K562 (cell line): ENCODE measurements at regions of chr2 and their contacts with region 1.

Region 1: GRCh38 chr2:30252723-30253701 is 21.7 kb downstream of the LBH start:
- DNase-seq: peak; percentile 82 to 95 (median 86)
- ATAC-seq: peak; percentile 84
- H3K4me3 ChIP-seq: no peak overlapping the region
- H3K27ac ChIP-seq: peak overlapping the region; percentile 94
- H3K4me1 ChIP-seq: peaks cover 48 to 49% of the 10 kb centered on the region in 2 experiments
- H3K27me3 ChIP-seq: no peaks in the 10 kb centered on the region
- CTCF ChIP-seq: no peak
- EP300 ChIP-seq: peak; percentile 99
- POLR2A ChIP-seq: peak; percentile 50; the same call in 1 of the 2 replicates
- RAD21 ChIP-seq: peak; percentile 26 to 42

Region 2: GRCh38 chr2:29611850-29612249 is 641.2 kb before region 1 on chr2:
- CTCF ChIA-PET with region 1: no interaction called
- POLR2A ChIA-PET with region 1: no interaction called
- in situ Hi-C with region 1: no loop called
- intact Hi-C with region 1: no loop called
- DNase-seq: no peak
- ATAC-seq: no peak
- H3K4me3 ChIP-seq: no peak overlapping the region
- H3K27ac ChIP-seq: no peak overlapping the region
- H3K4me1 ChIP-seq: no peaks in the 10 kb centered on the region
- H3K27me3 ChIP-seq: no peaks in the 10 kb centered on the region
- CTCF ChIP-seq: no peak
- EP300 ChIP-seq: no peak
- POLR2A ChIP-seq: no peak
- RAD21 ChIP-seq: no peak

Region 3: GRCh38 chr2:29940706-29941105 is 312.3 kb before region 1 on chr2:
- CTCF ChIA-PET with region 1: no interaction called
- POLR2A ChIA-PET with region 1: no interaction called
- in situ Hi-C with region 1: no loop called
- intact Hi-C with region 1: no loop called
- DNase-seq: no peak
- ATAC-seq: no peak
- H3K4me3 ChIP-seq: no peak overlapping the region
- H3K27ac ChIP-seq: no peak overlapping the region
- H3K4me1 ChIP-seq: no peaks in the 10 kb centered on the region
- H3K27me3 ChIP-seq: no peaks in the 10 kb centered on the region
- CTCF ChIP-seq: no peak
- EP300 ChIP-seq: no peak
- POLR2A ChIP-seq: no peak
- RAD21 ChIP-seq: no peak

Region 4: GRCh38 chr2:30239308-30239985 is 13.6 kb before region 1 on chr2:
- CTCF ChIA-PET with region 1: no interaction called
- POLR2A ChIA-PET with region 1: interaction called, 25 read pairs
- in situ Hi-C with region 1: no loop called
- intact Hi-C with region 1: loop called (anchors 1 kb)
- DNase-seq: peak; percentile 76 to 89 (median 80)
- ATAC-seq: peak; percentile 92
- H3K4me3 ChIP-seq: no peak overlapping the region
- H3K27ac ChIP-seq: no peak overlapping the region; the same call in 2 of the 3 replicates
- H3K4me1 ChIP-seq: peaks cover 15 to 23% of the 10 kb centered on the region in 2 experiments; a peak in 4 of 5 replicates
- H3K27me3 ChIP-seq: no peaks in the 10 kb centered on the region
- CTCF ChIP-seq: peak; percentile 88 to 99 (median 90)
- EP300 ChIP-seq: no peak
- POLR2A ChIP-seq: no peak
- RAD21 ChIP-seq: peak; percentile 63 to 70

Region 5: DNA sequence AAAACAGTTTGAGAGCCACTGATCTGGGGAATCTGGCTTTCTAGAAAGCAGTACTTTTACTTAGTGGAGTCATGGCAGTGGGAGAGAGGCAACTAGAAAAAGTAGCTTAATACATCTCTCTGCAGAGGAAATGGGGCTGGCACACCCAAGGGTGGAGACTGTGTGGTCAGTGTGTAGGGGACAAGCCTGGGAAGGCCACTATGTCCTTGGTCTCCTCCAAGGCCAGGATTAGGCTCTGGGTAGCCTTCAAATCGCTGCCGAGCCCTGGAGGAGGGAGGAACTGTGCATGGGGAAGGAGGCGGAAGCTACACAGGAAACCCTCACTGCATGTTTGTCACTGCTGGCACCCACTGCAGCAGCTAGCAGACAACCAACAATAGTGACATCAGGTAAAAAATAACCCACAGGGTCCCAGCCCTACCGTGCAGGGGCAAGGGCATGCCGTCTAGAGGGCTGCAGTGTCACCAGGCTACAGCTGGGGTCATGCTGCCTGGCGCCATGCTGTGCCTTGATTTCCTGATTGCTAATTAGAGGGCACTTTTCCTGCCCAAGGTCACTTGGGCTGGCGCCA is 13.1 kb after region 1 on chr2:
- CTCF ChIA-PET with region 1: no interaction called
- POLR2A ChIA-PET with region 1: interaction called, 7 read pairs
- in situ Hi-C with region 1: no loop called
- intact Hi-C with region 1: loop called (anchors 2 kb)
- DNase-seq: no peak
- ATAC-seq: no peak
- H3K4me3 ChIP-seq: no peak overlapping the region
- H3K27ac ChIP-seq: no peak overlapping the region
- H3K4me1 ChIP-seq: peaks cover 17 to 19% of the 10 kb centered on the region in 2 experiments; a peak in 4 of 5 replicates
- H3K27me3 ChIP-seq: no peaks in the 10 kb centered on the region
- CTCF ChIP-seq: no peak
- EP300 ChIP-seq: no peak
- POLR2A ChIP-seq: no peak
- RAD21 ChIP-seq: no peak